ENCODE measurements at regions of chr1 and their contacts with region 1.

Region 1: DNA sequence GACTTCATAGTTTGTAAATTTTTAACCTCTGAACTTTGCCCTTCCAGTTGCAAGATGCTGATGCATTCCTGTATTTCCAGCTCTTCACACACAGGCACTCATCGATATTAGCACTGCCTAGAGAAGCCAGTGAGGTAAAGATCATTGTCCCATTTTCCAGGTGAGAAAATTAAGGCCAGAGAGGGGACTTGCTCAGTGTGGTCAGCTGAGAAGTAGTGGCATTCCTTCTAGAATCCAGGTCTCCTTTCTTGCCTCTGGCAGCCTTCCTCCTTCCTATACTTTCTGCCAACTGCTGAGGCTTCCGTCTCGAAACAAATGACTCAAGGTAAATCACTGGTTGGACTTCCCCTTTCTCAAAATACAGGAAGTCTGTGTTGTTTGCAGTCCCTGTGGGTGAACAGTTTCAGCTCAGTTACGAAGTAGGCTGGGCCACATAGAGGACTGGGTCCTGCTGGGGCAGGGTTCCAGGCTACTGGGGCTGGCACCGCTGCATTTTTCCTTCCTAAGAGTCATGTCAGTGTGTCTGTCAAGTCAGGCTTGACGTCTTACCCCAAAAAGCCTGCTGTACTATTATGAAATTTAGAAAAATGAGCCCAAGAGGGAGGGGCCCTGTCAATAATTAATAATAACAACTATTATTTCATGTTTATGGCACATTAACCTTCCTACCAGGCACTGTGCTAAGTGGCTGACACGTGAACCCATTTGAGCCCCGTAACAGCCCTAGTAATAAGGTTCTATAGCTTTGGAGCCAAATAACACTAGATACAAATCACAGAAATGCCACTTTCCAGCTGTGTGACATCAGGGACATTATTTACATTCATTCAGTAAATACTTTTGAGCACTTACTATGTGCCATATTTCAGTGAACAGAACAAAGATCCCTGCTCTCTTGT is 16.6 kb upstream of the RNF19B start:
- DNase-seq: peak; percentile 74
- ATAC-seq: peak; percentile 97
- H3K4me3 Mint-ChIP-seq: peak overlapping the region; percentile 28
- H3K27ac Mint-ChIP-seq: peak overlapping the region; percentile 78
- H3K4me1 Mint-ChIP-seq: peaks cover 44% of the 10 kb centered on the region
- H3K27me3 Mint-ChIP-seq: no peaks in the 10 kb centered on the region
- CTCF ChIP-seq: no peak

Region 2: DNA sequence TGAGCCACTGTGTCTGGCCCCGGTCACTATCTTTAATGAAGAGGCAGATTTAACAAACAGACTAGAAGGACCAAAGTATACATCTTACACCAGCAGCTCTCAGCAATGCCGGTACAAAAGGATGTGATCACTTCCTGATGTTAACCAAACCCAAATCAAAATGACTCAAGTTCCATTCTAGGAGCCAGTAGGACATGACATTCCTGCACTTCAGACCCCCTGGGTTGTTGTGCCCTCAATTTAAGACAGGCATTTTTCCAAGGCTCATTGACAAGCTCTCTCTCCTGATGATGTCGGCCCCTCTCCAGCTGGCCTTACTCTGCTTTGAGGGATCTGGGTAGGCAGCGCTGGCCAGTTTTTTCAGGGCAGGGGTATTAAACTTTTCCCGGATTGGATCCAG is 199.2 kb before region 1 on chr1:
- CTCF ChIA-PET with region 1: no interaction called
- POLR2A ChIA-PET with region 1: no interaction called
- intact Hi-C with region 1: no loop called
- DNase-seq: no peak
- ATAC-seq: no peak
- H3K4me3 Mint-ChIP-seq: no peak overlapping the region
- H3K27ac Mint-ChIP-seq: peak overlapping the region; percentile 12
- H3K4me1 Mint-ChIP-seq: no peaks in the 10 kb centered on the region
- H3K27me3 Mint-ChIP-seq: no peaks in the 10 kb centered on the region
- CTCF ChIP-seq: no peak

Region 3: DNA sequence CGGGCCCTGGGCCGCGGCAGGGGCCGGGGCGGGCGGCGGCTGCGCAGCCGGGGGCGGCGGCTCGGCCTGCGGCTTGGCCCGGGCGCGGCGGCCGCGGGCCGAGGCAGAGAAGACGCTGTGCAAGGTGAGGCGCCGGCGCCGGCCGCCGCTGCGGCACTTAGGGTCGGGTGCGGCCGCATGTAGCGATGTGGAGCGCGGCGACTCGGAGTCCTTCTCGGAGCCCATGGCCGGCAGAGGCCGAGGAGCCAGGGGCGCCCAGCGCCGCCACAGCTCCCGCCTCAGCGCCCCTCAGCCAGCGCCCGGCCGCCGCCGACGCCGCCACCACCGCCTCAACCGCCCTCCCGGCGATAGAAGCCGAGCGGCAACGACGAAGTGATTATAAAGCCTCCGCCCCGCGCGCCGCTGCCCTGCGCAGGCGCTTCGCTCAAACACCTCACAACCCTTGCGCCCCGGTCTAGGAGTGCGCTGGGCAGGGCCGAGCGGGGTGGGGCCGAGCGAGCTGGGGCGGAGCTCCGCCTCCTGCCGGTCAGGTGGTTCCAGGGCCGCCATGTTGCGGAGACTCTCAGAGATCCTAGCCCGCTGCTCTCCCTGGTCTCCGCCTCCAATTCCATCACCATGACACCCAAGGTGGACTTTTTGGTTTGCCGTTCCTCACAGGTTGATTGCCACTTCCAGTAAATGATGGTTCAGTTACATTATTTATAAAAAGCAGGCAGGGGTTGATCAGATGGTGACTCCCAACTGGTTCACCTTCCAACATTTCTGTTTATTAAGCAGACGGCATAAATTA is 16.6 kb before region 1 on chr1 and contains the start of gene RNF19B:
- CTCF ChIA-PET with region 1: interaction called, 10 read pairs
- POLR2A ChIA-PET with region 1: interaction called, 7 read pairs
- intact Hi-C with region 1: no loop called
- DNase-seq: peak; percentile 96
- ATAC-seq: peak; percentile 97
- H3K4me3 Mint-ChIP-seq: peak within 1 kb of the TSS; percentile 79
- H3K27ac Mint-ChIP-seq: peak within 1 kb of the TSS; percentile 89
- H3K4me1 Mint-ChIP-seq: peaks cover 46% of the 10 kb centered on the region
- H3K27me3 Mint-ChIP-seq: no peaks in the 10 kb centered on the region
- CTCF ChIP-seq: no peak
- total RNA-seq, gene RNF19B: 10.6 to 10.9 TPM

Region 4: GRCh38 chr1:32992489-32993323 is 11.5 kb after region 1 on chr1:
- CTCF ChIA-PET with region 1: interaction called, 7 read pairs
- POLR2A ChIA-PET with region 1: interaction called, 12 read pairs
- intact Hi-C with region 1: no loop called
- DNase-seq: peak; percentile 84
- ATAC-seq: peak; percentile 87
- H3K4me3 Mint-ChIP-seq: no peak overlapping the region
- H3K27ac Mint-ChIP-seq: peak overlapping the region; percentile 21
- H3K4me1 Mint-ChIP-seq: peaks cover 38% of the 10 kb centered on the region
- H3K27me3 Mint-ChIP-seq: no peaks in the 10 kb centered on the region
- CTCF ChIP-seq: no peak

Region 5: GRCh38 chr1:33072707-33073106 is 91.5 kb after region 1 on chr1:
- CTCF ChIA-PET with region 1: no interaction called
- POLR2A ChIA-PET with region 1: no interaction called
- intact Hi-C with region 1: no loop called
- DNase-seq: no peak
- ATAC-seq: no peak
- H3K4me3 Mint-ChIP-seq: no peak overlapping the region
- H3K27ac Mint-ChIP-seq: no peak overlapping the region
- H3K4me1 Mint-ChIP-seq: no peaks in the 10 kb centered on the region
- H3K27me3 Mint-ChIP-seq: no peaks in the 10 kb centered on the region
- CTCF ChIP-seq: no peak